Lower leg skin (tissue), 4 donors: ENCODE measurements at regions of chr2 and their contacts with region 1.

Region 1: DNA sequence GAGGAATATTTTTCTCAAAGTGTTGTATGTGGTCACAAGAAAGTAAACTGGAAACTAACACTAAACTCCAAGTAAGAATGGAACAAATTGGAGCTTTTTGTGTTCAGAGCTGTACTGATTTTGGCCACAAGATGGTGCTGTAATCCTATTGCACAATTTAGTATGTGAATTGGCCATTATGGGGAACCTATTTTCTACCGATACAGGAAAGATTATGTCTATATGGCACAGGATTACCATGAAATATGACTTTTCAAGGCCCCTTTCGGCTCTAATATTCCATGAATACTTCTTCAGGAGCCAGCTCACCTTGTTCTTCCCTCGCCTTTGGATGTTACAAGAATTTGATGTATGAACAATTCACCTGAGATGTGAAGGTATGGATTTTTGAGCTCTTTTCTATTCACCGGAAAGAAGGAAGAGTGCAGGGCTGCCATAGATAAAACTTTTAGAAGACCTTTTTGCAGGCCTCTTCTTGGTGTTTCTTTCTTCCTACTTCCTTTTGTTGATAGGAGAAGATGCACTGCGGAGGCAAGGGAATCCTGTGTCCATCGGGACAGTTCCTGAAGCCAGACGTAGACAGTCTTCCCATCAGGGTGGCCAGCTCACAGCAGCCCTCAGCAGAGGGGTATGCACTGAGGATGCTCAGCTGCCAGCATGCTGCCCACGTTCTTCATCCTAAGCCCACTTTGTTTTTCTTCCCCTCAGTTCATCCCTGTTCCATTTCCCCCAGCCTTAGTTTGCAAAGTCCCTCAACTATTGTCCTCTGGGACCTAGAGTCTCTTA is 13.3 kb downstream of the MRPL44 start:
- DNase-seq: peak in 1 of 2 donors; percentile 49
- H3K4me3 ChIP-seq: no peak overlapping the region
- CTCF ChIP-seq: peak in 1 of 3 donors; percentile 52
- POLR2A ChIP-seq: no peak

Region 2: GRCh38 chr2:224284134-224284946 is 313.8 kb after region 1 on chr2:
- intact Hi-C with region 1: loop called (anchors 5 kb)
- DNase-seq: no peak
- H3K4me3 ChIP-seq: no peak overlapping the region
- CTCF ChIP-seq: peak in 1 of 3 donors; percentile 30
- POLR2A ChIP-seq: no peak